CD8-positive, alpha-beta memory T cell (primary cell): ENCODE measurements at regions of chr2 and their contacts with region 1.

Region 1: GRCh38 chr2:218659258-218659987 is at the starts of genes BCS1L and ZNF142:
- DNase-seq: peak; percentile 79 to 93 (median 88)
- H3K4me3 ChIP-seq: peak within 1 kb of the TSS; percentile 88
- H3K4me3 Mint-ChIP-seq: peak within 1 kb of the TSS; percentile 90 to 98 (median 94)
- H3K27ac ChIP-seq: peak within 1 kb of the TSS; percentile 80
- H3K27ac Mint-ChIP-seq: peak within 1 kb of the TSS; percentile 61 to 98 (median 94)
- H3K4me1 ChIP-seq: peaks cover 19% of the 10 kb centered on the region
- H3K4me1 Mint-ChIP-seq: peaks cover 26 to 44% (median 43%) of the 10 kb centered on the region in 3 donors
- H3K27me3 ChIP-seq: no peaks in the 10 kb centered on the region
- H3K27me3 Mint-ChIP-seq: no peaks in the 10 kb centered on the region
- total RNA-seq, gene BCS1L: 91.7 to 93.9 TPM
- total RNA-seq, gene ZNF142: 60.4 to 64.0 TPM

Region 2: DNA sequence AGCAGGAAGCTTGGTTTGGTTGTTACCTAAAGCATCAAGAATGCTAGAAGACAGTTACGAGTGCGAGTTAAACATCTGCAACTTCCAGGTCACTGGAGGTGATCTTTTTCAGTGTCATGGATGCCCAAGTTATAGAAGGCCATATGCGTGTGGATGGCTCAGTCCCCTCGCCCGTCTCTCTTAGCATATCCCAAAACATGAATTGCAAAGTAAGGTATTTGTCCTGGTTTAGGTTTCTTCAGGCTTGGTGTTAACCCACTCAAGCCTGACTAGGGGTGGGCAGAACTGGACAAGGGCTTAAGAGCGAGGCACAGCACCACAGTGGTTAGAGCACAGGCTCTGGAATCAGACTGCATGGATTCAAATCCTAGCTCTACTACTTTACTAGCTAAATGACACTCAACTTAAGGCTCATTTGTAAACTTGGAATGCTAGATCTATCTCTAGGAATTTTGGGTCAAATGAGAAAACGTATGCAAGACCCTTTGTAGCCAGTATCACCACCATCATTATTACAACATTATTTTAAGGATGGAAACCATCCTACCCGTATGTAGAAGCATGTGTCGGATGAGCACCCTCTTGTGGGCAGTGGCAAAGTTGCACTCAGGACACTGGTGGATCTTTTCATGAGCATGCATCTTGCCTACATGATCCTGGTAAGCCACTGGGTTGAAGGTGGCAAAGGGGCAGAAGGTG is 11.2 kb before region 1 on chr2:
- CTCF ChIA-PET with region 1: interaction called, 40 read pairs
- POLR2A ChIA-PET with region 1: no interaction called
- DNase-seq: peak in 4 of 5 donors; percentile 16 to 61 (median 32)
- H3K4me3 ChIP-seq: no peak overlapping the region
- H3K4me3 Mint-ChIP-seq: no peak overlapping the region
- H3K27ac ChIP-seq: no peak overlapping the region
- H3K27ac Mint-ChIP-seq: peak overlapping the region in 4 of 8 donors; percentile 6 to 76 (median 32)
- H3K4me1 ChIP-seq: no peaks in the 10 kb centered on the region
- H3K4me1 Mint-ChIP-seq: peaks cover 9 to 18% (median 13%) of the 10 kb centered on the region in 3 donors
- H3K27me3 ChIP-seq: no peaks in the 10 kb centered on the region
- H3K27me3 Mint-ChIP-seq: peaks cover 0 to 2% of the 10 kb centered on the region in 2 donors

Region 3: DNA sequence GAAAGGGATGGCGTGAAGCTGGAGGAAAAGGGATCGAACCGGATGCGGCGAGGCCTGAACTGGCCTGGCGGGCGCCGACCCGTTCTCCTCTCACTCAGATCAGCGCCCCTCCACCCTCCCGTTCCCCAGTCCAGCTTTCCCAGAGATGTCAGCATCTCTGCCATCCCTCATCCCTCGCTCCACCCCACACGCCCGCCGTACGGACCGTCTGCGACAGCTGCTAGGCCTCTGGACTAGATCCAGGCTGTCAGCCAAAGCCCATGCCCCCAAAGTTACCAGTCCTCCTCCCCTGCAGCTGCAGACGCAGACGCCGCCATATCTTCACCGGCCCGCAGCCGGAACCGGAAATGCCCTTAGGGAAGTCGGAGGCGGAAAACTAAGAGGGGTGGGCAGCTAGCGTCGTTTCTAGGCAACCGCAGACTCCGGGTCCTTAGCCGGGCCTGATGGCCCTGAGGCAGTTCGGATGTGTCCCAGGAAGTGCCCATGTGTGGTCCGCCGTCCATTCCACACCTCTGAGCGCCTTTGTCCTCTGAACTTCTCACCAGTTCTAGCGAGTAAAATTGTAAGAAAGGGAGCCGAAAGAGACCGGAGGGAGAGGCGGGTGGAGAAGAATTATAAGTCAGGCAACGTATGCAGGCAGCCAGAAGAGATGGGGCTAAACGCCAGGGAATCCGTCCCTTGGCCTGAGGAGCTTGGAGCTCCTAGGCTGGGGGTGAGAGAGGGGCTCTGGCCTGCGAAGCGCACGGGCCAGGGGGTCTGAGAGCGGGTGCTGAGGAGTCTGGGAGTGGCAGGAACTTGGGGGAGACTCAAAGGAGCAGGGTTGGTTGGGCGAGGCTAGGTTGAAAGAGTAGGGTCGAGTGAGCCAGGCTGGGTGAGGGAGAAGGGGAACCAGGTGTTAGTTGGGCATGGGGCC is 12.5 kb after region 1 on chr2 and contains the starts of genes RNF25 and STK36:
- CTCF ChIA-PET with region 1: interaction called, 34 read pairs
- POLR2A ChIA-PET with region 1: interaction called, 39 read pairs
- DNase-seq: peak; percentile 69 to 89 (median 78)
- H3K4me3 ChIP-seq: peak within 1 kb of the TSS; percentile 97
- H3K4me3 Mint-ChIP-seq: peak within 1 kb of the TSS; percentile 89 to 100 (median 98)
- H3K27ac ChIP-seq: peak within 1 kb of the TSS; percentile 82
- H3K27ac Mint-ChIP-seq: peak within 1 kb of the TSS; percentile 85 to 99 (median 98)
- H3K4me1 ChIP-seq: peaks cover 17% of the 10 kb centered on the region
- H3K4me1 Mint-ChIP-seq: peaks cover 21 to 35% (median 23%) of the 10 kb centered on the region in 3 donors
- H3K27me3 ChIP-seq: no peaks in the 10 kb centered on the region
- H3K27me3 Mint-ChIP-seq: no peaks in the 10 kb centered on the region
- total RNA-seq, gene RNF25: 29.0 to 36.8 TPM
- total RNA-seq, gene STK36: 19.9 to 21.4 TPM

Region 4: DNA sequence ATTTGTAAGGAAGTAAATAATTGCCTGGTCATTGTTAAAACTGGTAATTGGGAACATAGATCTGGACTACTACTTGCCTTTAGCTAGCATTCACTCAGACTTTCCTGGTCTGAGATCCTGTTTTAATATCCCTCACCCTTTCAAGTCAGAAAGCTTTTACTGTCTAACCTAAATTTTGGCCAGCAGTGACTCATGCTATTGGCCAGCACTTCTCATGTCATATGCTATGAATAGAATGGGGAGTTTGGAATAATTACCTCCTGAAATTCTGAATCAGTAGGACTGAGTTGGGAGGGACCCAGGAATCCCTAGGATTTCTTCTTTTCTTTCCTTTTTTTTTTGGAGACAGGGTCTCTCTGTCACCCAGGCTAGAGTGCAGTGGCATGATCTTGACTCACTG is 31.8 kb after region 1 on chr2:
- CTCF ChIA-PET with region 1: interaction called, 16 read pairs
- POLR2A ChIA-PET with region 1: no interaction called
- DNase-seq: no peak
- H3K4me3 ChIP-seq: no peak overlapping the region
- H3K4me3 Mint-ChIP-seq: no peak overlapping the region
- H3K27ac ChIP-seq: no peak overlapping the region
- H3K27ac Mint-ChIP-seq: no peak overlapping the region
- H3K4me1 ChIP-seq: no peaks in the 10 kb centered on the region
- H3K4me1 Mint-ChIP-seq: peaks cover 0 to 1% (median 0%) of the 10 kb centered on the region in 3 donors
- H3K27me3 ChIP-seq: no peaks in the 10 kb centered on the region
- H3K27me3 Mint-ChIP-seq: no peaks in the 10 kb centered on the region

Region 5: GRCh38 chr2:218710687-218711549 is 51.5 kb after region 1 on chr2 and contains the start of gene TTLL4:
- CTCF ChIA-PET with region 1: interaction called, 7 read pairs
- POLR2A ChIA-PET with region 1: interaction called, 14 read pairs
- DNase-seq: peak; percentile 98 to 99 (median 99)
- H3K4me3 ChIP-seq: peak within 1 kb of the TSS; percentile 69
- H3K4me3 Mint-ChIP-seq: peak within 1 kb of the TSS; percentile 90 to 99 (median 95)
- H3K27ac ChIP-seq: peak within 1 kb of the TSS; percentile 82
- H3K27ac Mint-ChIP-seq: peak within 1 kb of the TSS; percentile 72 to 98 (median 94)
- H3K4me1 ChIP-seq: peaks cover 16% of the 10 kb centered on the region
- H3K4me1 Mint-ChIP-seq: peaks cover 13 to 20% (median 17%) of the 10 kb centered on the region in 3 donors
- H3K27me3 ChIP-seq: no peaks in the 10 kb centered on the region
- H3K27me3 Mint-ChIP-seq: peaks cover 4 to 10% of the 10 kb centered on the region in 2 donors
- total RNA-seq, gene TTLL4: 42.0 to 44.2 TPM

Region 6: DNA sequence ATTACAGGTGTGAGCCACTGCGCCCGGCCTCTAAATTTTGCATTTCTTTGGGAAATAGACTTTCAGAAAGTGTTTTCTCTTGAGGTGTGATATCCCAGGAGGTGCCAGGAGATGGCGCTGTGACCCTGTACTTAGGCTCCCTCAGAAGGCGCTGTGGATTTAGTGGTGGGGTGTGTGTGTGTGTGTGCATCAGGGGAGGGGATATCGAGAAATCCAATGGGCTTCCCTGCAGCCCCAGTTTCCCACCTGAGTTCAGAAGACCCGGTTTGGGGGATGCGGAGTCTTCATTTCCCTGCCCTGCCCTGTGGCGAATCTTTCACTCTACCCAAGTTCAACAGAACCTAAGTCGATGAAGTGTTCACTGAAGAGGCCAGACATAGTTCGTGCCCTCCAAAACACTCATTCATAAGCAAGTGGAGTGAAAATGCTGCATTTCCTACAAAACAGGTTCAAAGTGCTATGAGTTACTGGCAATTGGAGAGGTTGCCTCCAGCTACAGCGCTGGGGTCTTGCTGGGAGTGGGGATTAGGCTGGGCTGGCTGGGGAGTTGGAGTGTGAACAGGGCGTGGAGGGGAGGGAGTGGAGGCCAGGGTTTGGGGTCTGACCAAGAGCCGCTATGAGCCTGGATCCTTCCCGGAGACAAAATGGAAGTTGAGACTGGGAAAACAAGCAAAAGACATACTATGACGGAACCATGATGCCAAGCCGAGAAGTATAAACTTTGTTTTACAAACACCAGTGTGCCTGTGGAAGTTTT is 193.7 kb after region 1 on chr2:
- CTCF ChIA-PET with region 1: interaction called, 32 read pairs
- POLR2A ChIA-PET with region 1: no interaction called
- DNase-seq: peak; percentile 46 to 77 (median 54)
- H3K4me3 ChIP-seq: no peak overlapping the region
- H3K4me3 Mint-ChIP-seq: no peak overlapping the region
- H3K27ac ChIP-seq: no peak overlapping the region
- H3K27ac Mint-ChIP-seq: no peak overlapping the region
- H3K4me1 ChIP-seq: no peaks in the 10 kb centered on the region
- H3K4me1 Mint-ChIP-seq: peaks cover 0 to 10% (median 6%) of the 10 kb centered on the region in 3 donors
- H3K27me3 ChIP-seq: peaks cover 20% of the 10 kb centered on the region
- H3K27me3 Mint-ChIP-seq: peaks cover 59 to 65% of the 10 kb centered on the region in 2 donors

Region 7: DNA sequence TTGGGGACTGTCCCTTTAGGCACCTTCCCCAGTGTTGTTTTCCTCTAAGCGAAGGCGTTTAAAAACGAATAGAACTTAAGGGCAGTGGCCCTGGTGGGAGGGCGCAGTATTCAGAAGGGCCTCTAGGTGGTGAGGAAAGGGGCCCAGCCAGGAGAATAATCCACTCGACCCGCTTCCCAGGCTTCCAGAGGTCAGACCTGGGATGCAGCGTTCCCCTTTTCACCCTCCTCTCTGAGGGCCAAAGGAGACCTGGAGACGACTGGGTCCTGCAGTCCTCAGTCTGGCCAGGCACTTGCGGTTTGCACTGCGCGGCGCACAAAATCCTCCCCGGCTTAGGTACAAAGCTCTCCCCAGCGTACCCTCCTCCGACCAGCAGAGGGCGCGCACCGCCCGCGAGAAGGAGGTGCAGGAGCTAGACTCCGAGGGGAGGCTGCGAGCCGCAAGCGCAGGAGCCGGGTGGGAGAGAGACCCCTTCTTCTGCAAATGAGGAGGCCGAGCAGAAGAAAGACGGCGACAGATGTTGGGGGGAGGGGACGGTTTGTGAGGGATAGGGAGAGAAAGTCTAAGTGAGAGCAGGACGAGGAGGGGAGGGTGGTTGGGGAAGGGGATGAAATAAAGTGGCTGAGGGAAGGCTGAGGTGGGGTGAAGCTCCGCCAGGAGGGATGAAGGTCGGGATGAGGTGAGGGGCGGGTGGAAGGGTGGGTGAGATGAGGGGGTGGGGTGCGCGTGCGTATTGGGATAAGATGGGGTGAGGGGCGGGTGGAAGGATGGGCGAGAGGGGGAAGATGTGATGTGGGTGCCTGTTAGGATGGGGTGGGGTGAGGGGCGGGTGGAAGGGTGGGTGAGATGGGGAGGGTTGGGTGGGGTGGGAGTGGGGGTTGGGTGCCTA is 320.7 kb after region 1 on chr2:
- CTCF ChIA-PET with region 1: no interaction called
- POLR2A ChIA-PET with region 1: no interaction called
- DNase-seq: peak; percentile 71 to 86 (median 73)
- H3K4me3 ChIP-seq: peak overlapping the region; percentile 32
- H3K4me3 Mint-ChIP-seq: peak overlapping the region; percentile 68 to 90 (median 78)
- H3K27ac ChIP-seq: no peak overlapping the region
- H3K27ac Mint-ChIP-seq: no peak overlapping the region
- H3K4me1 ChIP-seq: peaks cover 35% of the 10 kb centered on the region
- H3K4me1 Mint-ChIP-seq: peaks cover 16 to 43% (median 23%) of the 10 kb centered on the region in 3 donors
- H3K27me3 ChIP-seq: peaks cover 46% of the 10 kb centered on the region
- H3K27me3 Mint-ChIP-seq: peaks cover 48 to 77% of the 10 kb centered on the region in 2 donors